ENCODE measurements at regions of chr12 and their contacts with region 1.

Region 1: GRCh38 chr12:91178139-91178561 is 4.5 kb downstream of the DCN start:
- DNase-seq: no peak
- ATAC-seq: no peak
- H3K4me3 ChIP-seq: peak overlapping the region; percentile 28 to 44 (median 38)
- H3K27ac ChIP-seq: peak overlapping the region; percentile 48 to 62 (median 57)
- H3K4me1 ChIP-seq: no peaks in the 10 kb centered on the region
- H3K27me3 ChIP-seq: no peaks in the 10 kb centered on the region
- CTCF ChIP-seq: peak in 3 of 5 experiments; percentile 7 to 23 (median 21)
- POLR2A ChIP-seq: no peak

Region 2: DNA sequence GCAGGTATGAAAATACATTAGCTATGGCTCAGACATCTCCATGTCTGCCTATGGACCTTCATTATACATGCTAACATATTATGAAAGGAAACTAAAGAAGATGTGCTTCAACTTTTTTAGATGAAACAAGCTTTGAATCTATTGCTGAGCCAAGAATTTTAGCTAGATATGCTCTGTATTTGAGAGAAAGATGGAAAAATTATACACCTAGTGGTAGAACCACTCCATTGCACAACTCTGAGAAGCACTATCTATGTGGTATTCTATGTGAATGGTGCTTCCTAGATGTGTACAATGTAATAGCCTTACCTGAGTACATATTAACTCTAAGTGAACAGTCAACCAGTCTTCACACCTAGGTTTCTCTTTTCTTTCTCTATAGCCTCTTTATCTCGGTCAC is 190.6 kb before region 1 on chr12:
- in situ Hi-C with region 1: no loop called
- intact Hi-C with region 1: loop called (anchors 10 kb)
- DNase-seq: no peak
- ATAC-seq: no peak
- H3K4me3 ChIP-seq: no peak overlapping the region
- H3K27ac ChIP-seq: no peak overlapping the region
- H3K4me1 ChIP-seq: no peaks in the 10 kb centered on the region
- H3K27me3 ChIP-seq: no peaks in the 10 kb centered on the region
- CTCF ChIP-seq: no peak
- POLR2A ChIP-seq: no peak

Region 3: DNA sequence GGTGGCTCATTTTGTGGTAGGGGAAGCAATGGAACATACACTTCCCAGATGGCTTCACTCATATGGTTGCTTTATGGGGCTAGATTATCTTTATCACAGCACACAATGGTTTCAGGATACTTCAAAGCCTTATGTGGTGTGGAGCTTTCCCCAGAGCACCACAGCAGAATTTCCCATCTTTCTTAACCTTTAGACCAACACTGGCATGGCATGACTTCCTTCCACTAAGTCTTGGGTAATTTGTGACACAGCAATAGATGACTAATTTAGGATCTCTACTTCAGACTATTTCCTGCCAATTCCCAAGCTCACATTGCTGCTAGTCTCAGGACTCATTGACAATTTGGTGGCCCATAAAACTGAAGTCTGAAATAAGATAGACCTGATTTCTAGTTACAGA is 41.4 kb after region 1 on chr12:
- in situ Hi-C with region 1: no loop called
- intact Hi-C with region 1: loop called (anchors 5 kb)
- DNase-seq: no peak
- ATAC-seq: no peak
- H3K4me3 ChIP-seq: no peak overlapping the region
- H3K27ac ChIP-seq: no peak overlapping the region
- H3K4me1 ChIP-seq: no peaks in the 10 kb centered on the region
- H3K27me3 ChIP-seq: no peaks in the 10 kb centered on the region
- CTCF ChIP-seq: no peak
- POLR2A ChIP-seq: no peak